AG04450 (cell line): ENCODE measurements at regions of chr11 and their contacts with region 1.

Region 1: DNA sequence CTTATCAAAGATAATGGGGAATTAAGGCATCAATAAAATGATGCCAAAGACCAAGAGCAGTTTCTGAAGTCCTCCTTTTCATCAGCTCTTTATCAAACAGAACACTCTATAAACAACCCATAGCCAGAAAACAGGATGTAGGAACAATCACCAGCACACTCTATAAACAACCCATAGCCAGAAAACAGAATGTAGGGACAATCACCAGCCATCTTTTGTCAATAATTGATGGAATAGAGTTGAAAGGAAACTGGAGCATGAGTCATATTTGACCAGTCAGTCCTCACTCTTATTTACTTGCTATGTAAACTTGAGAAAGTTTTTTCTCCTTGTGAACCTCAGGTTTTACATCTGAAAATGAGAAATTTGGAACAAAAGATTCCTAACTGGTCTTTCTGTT is 10.0 kb downstream of the MS4A2 start:
- DNase-seq: no peak
- H3K4me3 ChIP-seq: no peak overlapping the region
- H3K27ac ChIP-seq: no peak overlapping the region
- H3K27me3 ChIP-seq: no peaks in the 10 kb centered on the region
- CTCF ChIP-seq: no peak

Region 2: GRCh38 chr11:59706518-59707285 is 391.8 kb before region 1 on chr11:
- CTCF ChIA-PET with region 1: no interaction called
- POLR2A ChIA-PET with region 1: interaction called, 10 read pairs
- DNase-seq: peak; percentile 13
- H3K4me3 ChIP-seq: no peak overlapping the region
- H3K27ac ChIP-seq: peak overlapping the region; percentile 42
- H3K27me3 ChIP-seq: no peaks in the 10 kb centered on the region
- CTCF ChIP-seq: no peak

Region 3: DNA sequence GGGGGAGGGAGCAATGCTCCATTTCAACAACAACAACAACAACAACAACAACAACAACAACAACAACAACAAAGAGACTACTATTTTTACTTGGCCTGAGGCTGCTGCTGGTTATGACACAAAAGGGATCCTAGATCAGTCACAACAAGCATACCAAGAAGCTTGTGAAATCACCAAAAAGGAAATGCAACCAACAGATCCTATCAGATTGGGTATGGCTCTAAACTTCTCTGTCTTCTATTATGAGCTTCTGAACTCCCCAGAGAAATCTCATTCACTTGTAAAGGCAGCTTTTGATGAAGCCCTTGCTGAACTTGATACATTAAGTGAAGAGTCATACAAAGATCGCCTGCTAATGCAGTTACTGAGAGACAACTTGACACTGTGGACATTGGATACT is 20.5 kb before region 1 on chr11:
- CTCF ChIA-PET with region 1: no interaction called
- POLR2A ChIA-PET with region 1: no interaction called
- DNase-seq: no peak
- H3K4me3 ChIP-seq: no peak overlapping the region
- H3K27ac ChIP-seq: no peak overlapping the region
- H3K27me3 ChIP-seq: no peaks in the 10 kb centered on the region
- CTCF ChIP-seq: no peak

Region 4: DNA sequence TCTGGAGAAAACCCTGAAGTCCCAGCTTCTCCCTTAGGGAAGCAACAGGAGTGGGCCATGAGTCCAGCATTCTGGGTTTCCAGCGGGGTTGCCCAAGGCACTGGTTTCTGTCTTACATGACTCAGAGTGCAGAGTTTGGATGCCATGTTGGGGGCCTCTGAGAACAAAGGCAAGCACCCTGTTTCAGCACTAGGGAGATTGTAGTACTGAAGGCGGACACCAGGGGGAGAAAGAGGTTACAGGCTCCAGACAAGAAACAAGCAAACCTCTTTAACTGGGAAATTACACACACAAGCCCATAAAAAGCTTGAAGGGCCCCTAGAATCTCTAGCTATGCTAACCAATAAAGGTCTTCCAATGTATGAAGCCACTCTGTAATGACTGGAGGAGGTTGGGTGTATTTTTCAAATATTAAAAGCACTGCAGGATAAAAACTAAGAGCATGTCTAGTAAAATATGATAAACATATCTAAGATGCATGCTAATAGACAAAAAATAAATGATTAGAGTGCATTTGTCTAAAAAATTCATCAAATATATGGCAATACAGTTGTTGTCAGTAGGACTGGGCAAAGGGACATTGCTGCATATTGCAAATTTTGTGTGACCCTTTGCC is 235.6 kb after region 1 on chr11:
- CTCF ChIA-PET with region 1: no interaction called
- POLR2A ChIA-PET with region 1: no interaction called
- DNase-seq: no peak
- H3K4me3 ChIP-seq: no peak overlapping the region
- H3K27ac ChIP-seq: no peak overlapping the region
- H3K27me3 ChIP-seq: no peaks in the 10 kb centered on the region
- CTCF ChIP-seq: peak; percentile 53